ENCODE measurements at regions of chr15 and their contacts with region 1.

Region 1: GRCh38 chr15:25739687-25740121 is 123.4 kb downstream of the ATP10A start:
- DNase-seq: no peak
- ATAC-seq: peak; percentile 78
- H3K4me3 Mint-ChIP-seq: no peak overlapping the region
- H3K27ac Mint-ChIP-seq: no peak overlapping the region
- H3K4me1 Mint-ChIP-seq: peaks cover 20% of the 10 kb centered on the region
- H3K27me3 Mint-ChIP-seq: peaks cover 37% of the 10 kb centered on the region
- CTCF ChIP-seq: no peak

Region 2: DNA sequence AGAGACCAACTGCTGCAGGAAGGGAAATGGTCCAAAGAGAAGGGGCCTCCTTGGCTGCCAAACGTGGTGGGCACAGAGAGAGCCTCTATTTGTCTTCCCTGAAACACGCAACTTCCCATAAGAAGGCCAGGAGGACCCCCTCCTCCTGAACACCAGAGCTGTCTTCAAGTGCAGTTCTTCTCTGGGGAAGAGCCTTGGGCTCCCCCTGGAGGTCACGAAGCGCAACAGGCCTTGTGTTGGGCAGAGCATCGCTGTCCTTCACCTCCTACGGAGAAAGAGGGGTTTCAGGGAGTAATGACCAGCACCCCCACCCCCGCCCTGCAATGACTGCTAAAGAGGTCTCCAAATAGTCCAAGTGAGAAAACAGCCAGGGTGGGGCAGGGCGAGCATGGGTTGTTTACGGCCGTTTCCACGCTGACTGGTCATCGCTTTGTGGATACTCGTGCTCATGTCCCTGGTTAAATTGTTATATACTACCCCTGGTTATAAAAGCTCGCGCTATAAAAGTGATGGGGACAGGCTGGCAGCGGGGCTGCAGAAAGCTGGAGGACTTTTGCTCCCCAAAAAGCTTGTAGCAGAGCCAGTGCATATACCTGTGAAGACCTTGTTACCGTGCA is 520.9 kb after region 1 on chr15:
- CTCF ChIA-PET with region 1: no interaction called
- POLR2A ChIA-PET with region 1: no interaction called
- intact Hi-C with region 1: loop called (anchors 1 kb)
- DNase-seq: no peak
- ATAC-seq: no peak
- H3K4me3 Mint-ChIP-seq: no peak overlapping the region
- H3K27ac Mint-ChIP-seq: no peak overlapping the region
- H3K4me1 Mint-ChIP-seq: no peaks in the 10 kb centered on the region
- H3K27me3 Mint-ChIP-seq: no peaks in the 10 kb centered on the region
- CTCF ChIP-seq: peak; percentile 34